Aorta (tissue), 5 donors: ENCODE measurements at regions of chr11 and their contacts with region 1.

Region 1: DNA sequence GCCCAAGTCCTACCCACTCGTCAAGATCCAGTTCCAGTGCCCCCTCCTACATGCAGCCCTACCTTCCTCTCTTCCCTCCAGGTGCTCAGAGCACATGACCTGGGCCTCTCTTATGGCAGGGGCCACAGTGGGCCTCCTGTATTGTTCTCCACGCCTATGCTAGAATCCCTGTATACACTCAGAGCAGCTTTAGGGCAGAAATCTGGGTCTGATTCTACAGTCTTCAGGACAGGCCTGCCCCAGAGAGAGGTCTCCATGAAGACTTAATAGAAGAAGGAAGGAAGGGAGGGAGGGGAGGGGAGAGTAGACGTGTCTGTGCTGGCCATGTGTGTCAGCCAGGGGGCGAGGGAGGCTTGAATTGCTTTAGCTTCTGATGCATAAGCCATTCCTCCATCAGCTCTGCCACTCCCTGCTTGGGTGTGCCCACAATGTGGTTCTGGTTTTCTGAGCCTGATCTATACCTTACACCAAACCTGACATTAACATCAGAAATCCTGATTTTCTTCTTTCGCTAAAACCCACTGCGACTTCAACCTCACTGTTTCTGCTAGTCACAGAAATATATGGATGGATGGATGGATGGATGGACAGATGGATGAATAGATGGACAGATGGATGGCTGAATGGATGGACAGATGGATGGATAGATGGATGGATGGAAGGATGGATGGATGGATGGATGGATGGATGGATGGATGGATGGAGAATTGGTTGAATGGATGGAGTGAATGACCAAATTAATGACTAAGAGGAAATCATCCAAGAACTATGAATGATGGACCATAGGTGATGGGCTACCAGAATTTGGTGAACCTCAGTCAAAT is 56.6 kb upstream of the PRDM11 start:
- DNase-seq: no peak
- ATAC-seq: peak; percentile 3
- H3K4me3 ChIP-seq: no peak overlapping the region
- H3K27ac ChIP-seq: peak overlapping the region; percentile 29 to 92
- H3K4me1 ChIP-seq: no peaks in the 10 kb centered on the region
- H3K27me3 ChIP-seq: no peaks in the 10 kb centered on the region

Region 2: DNA sequence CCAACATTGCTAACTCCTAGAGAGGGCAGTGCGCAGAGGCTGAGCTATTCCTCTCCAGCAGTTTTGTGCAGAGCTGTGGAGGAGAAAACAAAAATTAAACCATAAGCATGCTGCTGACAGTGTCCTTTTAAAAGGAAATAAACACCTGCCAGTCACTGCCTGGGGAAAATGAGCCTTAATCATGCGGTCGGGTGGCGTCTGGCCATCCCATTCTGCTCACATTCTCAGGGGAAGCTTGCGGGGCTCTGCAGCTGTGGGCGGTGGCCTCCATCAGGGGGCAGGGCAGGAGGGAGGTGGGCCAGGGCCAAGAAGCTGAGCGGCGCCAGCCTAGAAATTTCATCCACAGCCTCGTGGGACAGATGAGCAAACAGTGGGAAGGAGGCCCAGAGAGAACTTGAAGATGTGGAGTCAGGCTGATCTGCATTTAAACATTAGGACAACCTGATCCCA is 68.2 kb before region 1 on chr11:
- intact Hi-C with region 1: loop called (anchors 5 kb)
- DNase-seq: peak; percentile 90 to 91
- ATAC-seq: peak; percentile 87
- H3K4me3 ChIP-seq: no peak overlapping the region
- H3K27ac ChIP-seq: peak overlapping the region in 1 of 2 donors; percentile 16
- H3K4me1 ChIP-seq: peaks cover 0 to 3% of the 10 kb centered on the region in 2 donors
- H3K27me3 ChIP-seq: no peaks in the 10 kb centered on the region